ENCODE measurements at regions of chr15 and their contacts with region 1.

Region 1: DNA sequence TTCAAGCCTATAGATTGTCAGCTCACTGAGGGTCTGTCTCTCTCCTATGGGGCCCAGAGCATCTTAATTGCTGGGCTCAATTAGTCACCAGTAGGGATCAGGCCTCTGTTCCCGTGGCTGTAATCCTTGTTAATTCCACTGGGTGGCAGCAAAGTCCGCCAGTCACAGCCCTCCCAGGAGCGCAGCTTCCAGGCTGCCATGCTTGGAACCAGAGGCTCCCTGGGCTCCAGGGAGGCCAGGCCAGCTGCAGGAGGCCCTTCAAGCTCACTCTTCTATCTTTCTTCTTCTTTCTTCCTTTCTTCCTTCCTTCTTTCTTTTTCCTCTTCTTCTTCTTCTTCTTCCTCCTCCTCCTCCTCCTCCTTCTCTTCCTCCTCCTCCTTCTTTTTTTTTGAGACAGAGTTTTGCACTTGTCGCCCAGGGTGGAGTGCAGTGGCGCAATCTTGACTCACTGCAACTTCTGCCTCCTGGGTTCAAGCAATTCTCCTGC is 14.4 kb downstream of the RNU5B-1 start:
- DNase-seq: peak; percentile 58 to 82 (median 64)
- H3K4me3 ChIP-seq: no peak overlapping the region
- H3K4me3 Mint-ChIP-seq: no peak overlapping the region
- H3K27ac ChIP-seq: no peak overlapping the region
- H3K27ac Mint-ChIP-seq: peak overlapping the region in 3 of 8 donors; percentile 4 to 39 (median 31)
- H3K4me1 ChIP-seq: no peaks in the 10 kb centered on the region
- H3K4me1 Mint-ChIP-seq: no peaks in the 10 kb centered on the region
- H3K27me3 ChIP-seq: peaks cover 3% of the 10 kb centered on the region
- H3K27me3 Mint-ChIP-seq: peaks cover 6 to 20% of the 10 kb centered on the region in 2 donors

Region 2: DNA sequence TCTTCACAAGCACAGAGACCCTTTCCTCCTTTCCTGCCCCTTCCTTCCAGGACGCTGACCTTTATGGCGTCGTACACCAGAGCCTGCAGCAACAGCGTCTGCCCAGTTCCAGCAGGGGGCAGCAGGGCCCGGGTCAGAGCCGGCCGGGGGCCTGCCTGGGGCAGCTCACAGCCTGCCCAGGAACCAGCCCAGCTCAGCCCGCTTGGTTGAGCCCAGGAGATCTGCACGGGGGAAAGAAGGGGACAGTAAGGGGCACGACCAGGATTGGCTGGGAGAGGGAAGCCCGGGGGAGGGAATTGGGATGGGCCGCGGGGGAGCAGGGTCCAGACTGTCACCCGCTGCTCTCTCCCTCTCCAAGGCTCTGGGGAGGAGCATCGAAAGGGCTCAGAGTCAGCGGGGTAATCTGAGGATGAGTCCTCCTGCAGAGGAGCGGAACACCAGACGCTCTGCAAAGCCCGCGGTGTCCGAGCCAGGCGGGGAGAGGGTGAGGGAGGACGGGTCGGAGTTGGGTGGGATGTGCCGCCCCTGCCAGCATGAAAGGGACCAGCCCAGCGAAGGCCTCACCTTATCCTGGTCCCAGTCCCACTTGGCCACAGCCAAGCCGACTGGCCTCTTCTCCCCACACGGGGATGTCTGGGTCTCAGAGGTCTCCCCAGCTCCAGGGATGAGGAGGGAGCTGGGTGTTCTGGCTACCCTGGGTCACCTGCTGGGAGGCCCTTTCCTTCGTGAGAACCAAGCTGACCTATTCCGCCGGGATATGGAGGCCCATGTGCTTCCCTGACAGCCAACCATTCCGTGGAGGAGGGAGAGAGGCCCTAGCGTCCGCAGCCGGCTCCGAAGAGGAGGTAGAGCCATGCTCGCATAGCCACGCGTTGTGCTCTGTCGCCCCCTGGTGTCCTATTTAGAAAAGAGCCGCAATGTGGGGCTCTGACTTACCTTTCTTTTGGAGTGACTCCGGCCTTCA is 66.3 kb after region 1 on chr15:
- CTCF ChIA-PET with region 1: interaction called, 113 read pairs
- POLR2A ChIA-PET with region 1: no interaction called
- DNase-seq: peak; percentile 68 to 87 (median 74)
- H3K4me3 ChIP-seq: peak overlapping the region; percentile 92
- H3K4me3 Mint-ChIP-seq: peak overlapping the region; percentile 86 to 97 (median 91)
- H3K27ac ChIP-seq: no peak overlapping the region
- H3K27ac Mint-ChIP-seq: peak overlapping the region; percentile 22 to 89 (median 84)
- H3K4me1 ChIP-seq: peaks cover 10% of the 10 kb centered on the region
- H3K4me1 Mint-ChIP-seq: peaks cover 4 to 16% (median 8%) of the 10 kb centered on the region in 3 donors
- H3K27me3 ChIP-seq: peaks cover 3% of the 10 kb centered on the region
- H3K27me3 Mint-ChIP-seq: peaks cover 7 to 12% of the 10 kb centered on the region in 2 donors

Measured in CD8-positive, alpha-beta memory T cell (primary cell).